ENCODE measurements at regions of chrX and their contacts with region 1.

Region 1: GRCh38 chrX:131841496-131842410 is 181.3 kb upstream of the STK26 start:
- DNase-seq: peak; percentile 56 to 66
- H3K4me3 ChIP-seq: no peak overlapping the region
- H3K4me3 Mint-ChIP-seq: no peak overlapping the region
- H3K27ac Mint-ChIP-seq: no peak overlapping the region
- H3K4me1 ChIP-seq: 0 out of 2 replicates have a peak, but pooled peaks cover 4% of the 10 kb centered on the region
- H3K4me1 Mint-ChIP-seq: no peaks in the 10 kb centered on the region
- H3K27me3 ChIP-seq: no peaks in the 10 kb centered on the region
- H3K27me3 Mint-ChIP-seq: no peaks in the 10 kb centered on the region
- CTCF ChIP-seq: peak; percentile 59 to 70

Region 2: GRCh38 chrX:131985489-131986049 is 143.8 kb after region 1 on chrX:
- CTCF ChIA-PET with region 1: interaction called, 7 read pairs
- POLR2A ChIA-PET with region 1: no interaction called
- intact Hi-C with region 1: loop called (anchors 1 kb)
- DNase-seq: peak; percentile 57 to 60
- H3K4me3 ChIP-seq: no peak overlapping the region
- H3K4me3 Mint-ChIP-seq: peak overlapping the region; percentile 24
- H3K27ac Mint-ChIP-seq: peak overlapping the region; percentile 79
- H3K4me1 ChIP-seq: peaks cover 6% of the 10 kb centered on the region
- H3K4me1 Mint-ChIP-seq: peaks cover 9% of the 10 kb centered on the region
- H3K27me3 ChIP-seq: no peaks in the 10 kb centered on the region
- H3K27me3 Mint-ChIP-seq: no peaks in the 10 kb centered on the region
- CTCF ChIP-seq: peak; percentile 23 to 27

Measured in Caco-2 (cell line).